T-cell (primary cell): ENCODE measurements at regions of chr7 and their contacts with region 1.

Region 1: GRCh38 chr7:22697876-22698606 is 29.0 kb upstream of the IL6 start:
- DNase-seq: peak in 4 of 35 experiments; percentile 2 to 51 (median 10)
- ATAC-seq: peak; percentile 52 to 74 (median 60)
- H3K4me3 ChIP-seq: no peak overlapping the region
- H3K4me3 Mint-ChIP-seq: peak overlapping the region in 1 of 3 donors; percentile 22
- H3K27ac ChIP-seq: no peak overlapping the region
- H3K27ac Mint-ChIP-seq: peak overlapping the region in 1 of 2 donors; percentile 4
- H3K4me1 ChIP-seq: peaks cover 0 to 11% of the 10 kb centered on the region in 2 experiments
- H3K4me1 Mint-ChIP-seq: peaks cover 41 to 58% (median 50%) of the 10 kb centered on the region in 3 donors
- H3K27me3 ChIP-seq: peaks cover 0 to 4% of the 10 kb centered on the region in 2 experiments
- H3K27me3 Mint-ChIP-seq: peaks cover 0 to 4% of the 10 kb centered on the region in 2 donors

Region 2: GRCh38 chr7:22625251-22625650 is 72.8 kb before region 1 on chr7:
- CTCF ChIA-PET with region 1: no interaction called
- POLR2A ChIA-PET with region 1: interaction called in 1 of 2 experiments, 11 read pairs
- DNase-seq: no peak
- ATAC-seq: no peak
- H3K4me3 ChIP-seq: no peak overlapping the region
- H3K4me3 Mint-ChIP-seq: no peak overlapping the region
- H3K27ac ChIP-seq: no peak overlapping the region
- H3K27ac Mint-ChIP-seq: no peak overlapping the region
- H3K4me1 ChIP-seq: no peaks in the 10 kb centered on the region
- H3K4me1 Mint-ChIP-seq: no peaks in the 10 kb centered on the region
- H3K27me3 ChIP-seq: no peaks in the 10 kb centered on the region
- H3K27me3 Mint-ChIP-seq: peaks cover 5 to 12% of the 10 kb centered on the region in 2 donors

Region 3: DNA sequence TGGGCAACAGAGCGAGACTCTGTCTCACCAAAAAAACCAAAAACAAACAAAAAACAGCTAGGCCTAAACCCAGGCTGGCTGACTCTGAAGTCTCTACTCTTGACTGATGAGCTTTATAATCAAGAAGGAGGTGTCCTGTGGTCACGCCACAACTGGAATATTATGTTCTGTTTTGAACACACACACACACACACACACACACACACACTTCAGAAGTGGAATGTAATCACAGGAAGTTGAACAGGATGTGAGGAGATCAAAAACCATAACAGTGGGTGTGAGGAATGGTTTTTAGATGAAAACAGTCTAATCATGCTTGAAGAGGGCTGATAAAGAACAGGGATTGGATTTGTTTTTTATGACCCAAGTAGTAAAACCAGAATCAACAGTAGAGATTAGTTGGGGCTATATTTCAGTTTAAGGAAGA is 22.1 kb before region 1 on chr7:
- CTCF ChIA-PET with region 1: interaction called, 3 to 9 read pairs
- POLR2A ChIA-PET with region 1: interaction called, 3 to 10 read pairs
- DNase-seq: peak in 32 of 35 experiments; percentile 3 to 64 (median 37)
- ATAC-seq: peak; percentile 75 to 87 (median 81)
- H3K4me3 ChIP-seq: no peak overlapping the region
- H3K4me3 Mint-ChIP-seq: peak overlapping the region in 2 of 3 donors; percentile 0 to 58
- H3K27ac ChIP-seq: peak overlapping the region; percentile 24
- H3K27ac Mint-ChIP-seq: peak overlapping the region; percentile 88 to 93
- H3K4me1 ChIP-seq: peaks cover 22 to 35% of the 10 kb centered on the region in 2 experiments
- H3K4me1 Mint-ChIP-seq: peaks cover 68 to 88% (median 77%) of the 10 kb centered on the region in 3 donors
- H3K27me3 ChIP-seq: no peaks in the 10 kb centered on the region
- H3K27me3 Mint-ChIP-seq: no peaks in the 10 kb centered on the region

Region 4: GRCh38 chr7:22751341-22751740 is 53.3 kb after region 1 on chr7:
- CTCF ChIA-PET with region 1: no interaction called
- POLR2A ChIA-PET with region 1: no interaction called
- DNase-seq: no peak
- ATAC-seq: no peak
- H3K4me3 ChIP-seq: no peak overlapping the region
- H3K4me3 Mint-ChIP-seq: no peak overlapping the region
- H3K27ac ChIP-seq: no peak overlapping the region
- H3K27ac Mint-ChIP-seq: no peak overlapping the region
- H3K4me1 ChIP-seq: no peaks in the 10 kb centered on the region
- H3K4me1 Mint-ChIP-seq: no peaks in the 10 kb centered on the region
- H3K27me3 ChIP-seq: peaks cover 0 to 2% of the 10 kb centered on the region in 2 experiments
- H3K27me3 Mint-ChIP-seq: peaks cover 14 to 15% of the 10 kb centered on the region in 2 donors

Region 5: DNA sequence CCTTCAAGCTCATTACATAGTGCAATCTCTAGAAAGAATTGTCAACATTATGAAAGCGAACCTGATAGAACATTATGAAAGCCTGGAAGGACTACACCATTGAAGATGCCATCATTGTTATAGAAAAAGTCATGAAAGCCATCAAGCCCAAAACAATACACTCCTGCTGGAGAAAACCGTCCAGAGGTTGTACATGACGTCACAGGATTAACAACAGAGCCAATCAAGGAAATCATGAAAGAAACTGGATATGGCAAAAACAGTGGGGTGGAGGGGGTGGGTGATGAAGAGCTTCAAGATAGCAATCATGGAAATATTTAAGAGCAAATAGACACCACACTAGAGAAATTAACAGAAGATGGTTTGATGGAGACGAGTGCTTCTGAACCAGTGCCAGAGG is 78.9 kb after region 1 on chr7:
- CTCF ChIA-PET with region 1: interaction called in 1 of 2 experiments, 10 read pairs
- POLR2A ChIA-PET with region 1: interaction called in 1 of 2 experiments, 7 read pairs
- DNase-seq: no peak
- ATAC-seq: no peak
- H3K4me3 ChIP-seq: no peak overlapping the region
- H3K4me3 Mint-ChIP-seq: no peak overlapping the region
- H3K27ac ChIP-seq: no peak overlapping the region
- H3K27ac Mint-ChIP-seq: no peak overlapping the region
- H3K4me1 ChIP-seq: no peaks in the 10 kb centered on the region
- H3K4me1 Mint-ChIP-seq: no peaks in the 10 kb centered on the region
- H3K27me3 ChIP-seq: no peaks in the 10 kb centered on the region
- H3K27me3 Mint-ChIP-seq: peaks cover 1 to 8% of the 10 kb centered on the region in 2 donors